ENCODE measurements at regions of chr7 and their contacts with region 1.

Region 1: DNA sequence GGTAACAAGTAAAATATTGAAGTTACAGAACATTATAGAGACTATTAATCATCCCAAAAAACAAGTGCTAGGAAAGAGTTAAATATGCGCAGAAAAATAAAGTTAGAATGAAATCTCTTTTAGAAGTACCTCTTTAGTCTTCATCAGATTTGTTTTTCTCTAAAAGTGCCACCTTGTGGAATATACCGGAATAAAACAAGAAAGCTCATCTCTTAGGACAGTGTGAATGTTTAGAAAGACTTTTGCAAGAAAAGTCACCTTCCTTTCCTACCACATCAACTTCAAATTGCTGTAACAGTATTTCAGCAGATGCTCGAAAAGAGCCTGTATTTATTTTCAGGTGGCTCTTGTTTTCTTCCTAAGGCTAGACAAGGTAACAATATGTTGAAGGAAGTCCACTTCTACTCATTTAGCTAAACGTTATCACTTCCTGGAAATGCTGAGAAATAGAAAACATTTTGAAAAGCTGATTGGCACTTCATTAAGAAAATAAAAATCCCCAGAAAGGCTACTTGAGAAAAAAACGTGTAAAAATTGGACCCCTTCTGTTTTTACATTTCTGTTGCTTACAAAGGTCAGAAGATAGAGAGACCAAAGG is 19.8 kb upstream of the FAM133B start:
- DNase-seq: peak; percentile 37
- ATAC-seq: peak; percentile 33; the same call in 1 of the 2 replicates
- H3K4me3 ChIP-seq: no peak overlapping the region
- H3K27ac ChIP-seq: no peak overlapping the region
- H3K4me1 ChIP-seq: peaks cover 14% of the 10 kb centered on the region
- H3K27me3 ChIP-seq: no peaks in the 10 kb centered on the region
- CTCF ChIP-seq: 0 out of 2 replicates have a peak, but pooled peaks have one; percentile 32
- POLR2A ChIP-seq: no peak
- RAD21 ChIP-seq: 0 out of 2 replicates have a peak, but pooled peaks have one; percentile 5

Region 2: GRCh38 chr7:92528188-92528957 is 81.6 kb before region 1 on chr7 and contains the starts of genes PEX1 and RBM48:
- CTCF ChIA-PET with region 1: no interaction called
- POLR2A ChIA-PET with region 1: interaction called, 5 read pairs
- dilution Hi-C with region 1: no loop called
- in situ Hi-C with region 1: no loop called
- intact Hi-C with region 1: loop called (anchors 5 kb)
- DNase-seq: peak; percentile 99
- ATAC-seq: peak; percentile 97
- H3K4me3 ChIP-seq: peak within 1 kb of the TSS; percentile 95
- H3K27ac ChIP-seq: peak within 1 kb of the TSS; percentile 92
- H3K4me1 ChIP-seq: peaks cover 2% of the 10 kb centered on the region; the same call in 1 of the 2 replicates
- H3K27me3 ChIP-seq: no peaks in the 10 kb centered on the region
- CTCF ChIP-seq: peak; percentile 49
- POLR2A ChIP-seq: peak; percentile 89
- RAD21 ChIP-seq: peak; percentile 1; the same call in 1 of the 2 replicates
- total RNA-seq, gene PEX1: 12.7 and 13.9 TPM in 2 replicates
- total RNA-seq, gene RBM48: 5.6 and 10.6 TPM in 2 replicates